ENCODE measurements at regions of chr10 and their contacts with region 1.

Region 1: DNA sequence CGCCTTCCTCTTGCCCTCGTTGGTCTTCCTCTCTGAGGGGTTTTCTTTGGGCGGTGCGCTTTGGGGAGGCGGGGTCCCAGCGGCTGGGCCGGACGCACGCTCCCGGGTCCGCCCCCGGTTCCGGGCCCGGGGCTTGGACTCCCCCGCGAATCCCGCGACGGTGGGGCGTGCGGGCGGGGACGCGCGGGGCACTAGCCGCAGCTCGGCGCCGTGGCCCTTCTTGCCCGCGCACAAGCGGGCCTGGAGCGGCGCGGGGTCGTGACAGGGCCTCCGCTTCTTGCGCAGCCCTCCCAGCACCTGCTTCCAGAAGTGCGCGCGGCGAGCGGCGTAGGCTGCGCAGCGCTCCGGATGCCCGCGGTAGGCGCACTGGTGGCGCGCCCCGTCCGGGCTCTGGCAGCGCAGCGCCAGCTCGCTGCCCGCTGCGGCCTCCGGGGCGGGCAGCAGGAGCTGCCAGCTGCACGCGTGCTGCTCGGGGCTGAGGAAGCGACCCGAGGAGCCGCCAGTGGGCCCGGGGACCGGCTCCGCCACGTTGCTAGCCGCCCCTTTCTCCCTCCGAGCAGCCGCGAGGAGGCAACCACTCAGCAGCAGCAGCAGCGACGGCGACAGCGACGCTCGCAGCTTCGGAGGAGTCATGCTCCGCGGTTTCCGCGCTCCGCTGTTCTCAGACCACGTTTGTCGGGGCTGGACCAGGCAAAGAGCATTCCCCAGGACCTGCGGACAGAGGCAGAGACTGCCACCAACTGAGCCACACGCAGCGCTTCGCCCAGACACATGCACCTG is 759 bp downstream of the FGFBP3 start:
- DNase-seq: peak; percentile 45 to 77 (median 71)
- H3K4me3 ChIP-seq: peak overlapping the region; percentile 93
- H3K4me3 Mint-ChIP-seq: peak overlapping the region; percentile 88 to 97 (median 93)
- H3K27ac ChIP-seq: peak overlapping the region; percentile 70
- H3K27ac Mint-ChIP-seq: peak overlapping the region; percentile 81 to 95 (median 89)
- H3K4me1 ChIP-seq: peaks cover 19% of the 10 kb centered on the region
- H3K4me1 Mint-ChIP-seq: peaks cover 16 to 34% (median 32%) of the 10 kb centered on the region in 3 donors
- H3K27me3 ChIP-seq: no peaks in the 10 kb centered on the region
- H3K27me3 Mint-ChIP-seq: peaks cover 0 to 7% of the 10 kb centered on the region in 2 donors

Region 2: GRCh38 chr10:91758303-91759146 is 150.0 kb before region 1 on chr10:
- CTCF ChIA-PET with region 1: interaction called, 71 read pairs
- POLR2A ChIA-PET with region 1: interaction called, 6 read pairs
- DNase-seq: peak in 2 of 5 donors; percentile 54 to 55
- H3K4me3 ChIP-seq: no peak overlapping the region
- H3K4me3 Mint-ChIP-seq: no peak overlapping the region
- H3K27ac ChIP-seq: no peak overlapping the region
- H3K27ac Mint-ChIP-seq: no peak overlapping the region
- H3K4me1 ChIP-seq: no peaks in the 10 kb centered on the region
- H3K4me1 Mint-ChIP-seq: no peaks in the 10 kb centered on the region
- H3K27me3 ChIP-seq: no peaks in the 10 kb centered on the region
- H3K27me3 Mint-ChIP-seq: peaks cover 5 to 21% of the 10 kb centered on the region in 2 donors

Region 3: GRCh38 chr10:91797874-91798648 is 110.5 kb before region 1 on chr10 and contains the start of gene TNKS2:
- CTCF ChIA-PET with region 1: interaction called, 6 read pairs
- POLR2A ChIA-PET with region 1: interaction called, 16 read pairs
- DNase-seq: peak; percentile 92 to 94 (median 93)
- H3K4me3 ChIP-seq: peak within 1 kb of the TSS; percentile 71
- H3K4me3 Mint-ChIP-seq: peak within 1 kb of the TSS; percentile 95 to 99 (median 97)
- H3K27ac ChIP-seq: peak within 1 kb of the TSS; percentile 82
- H3K27ac Mint-ChIP-seq: peak within 1 kb of the TSS; percentile 96 to 99 (median 98)
- H3K4me1 ChIP-seq: peaks cover 30% of the 10 kb centered on the region
- H3K4me1 Mint-ChIP-seq: peaks cover 59 to 73% (median 70%) of the 10 kb centered on the region in 3 donors
- H3K27me3 ChIP-seq: no peaks in the 10 kb centered on the region
- H3K27me3 Mint-ChIP-seq: peaks cover 0 to 5% of the 10 kb centered on the region in 2 donors
- total RNA-seq, gene TNKS2: 27.3 to 29.2 TPM

Region 4: GRCh38 chr10:92156874-92157773 is 248.6 kb after region 1 on chr10:
- CTCF ChIA-PET with region 1: no interaction called
- POLR2A ChIA-PET with region 1: no interaction called
- DNase-seq: no peak
- H3K4me3 ChIP-seq: no peak overlapping the region
- H3K4me3 Mint-ChIP-seq: no peak overlapping the region
- H3K27ac ChIP-seq: no peak overlapping the region
- H3K27ac Mint-ChIP-seq: no peak overlapping the region
- H3K4me1 ChIP-seq: no peaks in the 10 kb centered on the region
- H3K4me1 Mint-ChIP-seq: no peaks in the 10 kb centered on the region
- H3K27me3 ChIP-seq: no peaks in the 10 kb centered on the region
- H3K27me3 Mint-ChIP-seq: no peaks in the 10 kb centered on the region